ENCODE measurements at regions of chr10 and their contacts with region 1.

Region 1: DNA sequence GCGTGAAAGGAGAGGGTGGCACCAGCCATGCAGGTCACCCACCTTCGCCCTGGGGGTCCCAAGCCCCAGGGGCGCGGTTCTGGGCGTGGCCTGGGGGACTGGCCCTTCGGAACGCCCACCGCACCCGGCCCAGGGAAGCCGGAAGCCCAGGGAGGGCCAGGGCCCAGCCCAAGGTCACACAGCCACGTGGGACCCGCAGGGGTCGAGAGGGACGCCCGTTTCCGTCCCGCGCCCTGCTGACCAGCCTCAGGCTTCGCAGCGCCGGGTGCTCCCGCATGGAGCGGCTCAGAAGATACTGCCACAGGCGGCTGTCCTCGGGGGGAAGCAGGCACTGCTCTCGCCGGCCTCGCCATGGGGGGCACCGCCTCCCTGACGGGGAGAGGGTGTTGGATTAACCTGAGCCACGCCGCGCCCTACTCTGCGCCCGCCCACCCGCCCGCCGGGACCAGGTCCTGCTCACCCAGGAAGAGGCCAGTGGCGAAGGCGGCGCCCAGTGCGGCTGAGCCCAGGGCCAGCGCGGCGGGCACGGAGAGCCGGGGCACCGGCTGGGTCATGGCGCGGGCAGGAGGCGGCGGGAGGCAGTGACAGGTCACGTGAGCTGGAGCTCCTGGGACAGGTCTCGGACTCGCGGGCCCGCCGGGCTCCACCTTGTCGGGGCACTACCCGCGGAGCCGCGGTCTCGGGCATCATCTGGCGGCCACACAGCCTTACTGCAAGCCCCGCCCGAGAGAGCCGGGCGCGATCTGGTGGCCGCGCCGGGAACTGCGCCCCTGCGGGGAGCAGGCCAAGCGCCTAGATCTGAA is at the start of gene COMTD1:
- DNase-seq: peak; percentile 83 to 98
- H3K4me3 ChIP-seq: peak within 1 kb of the TSS; percentile 80
- H3K27ac ChIP-seq: peak within 1 kb of the TSS; percentile 86
- H3K4me1 ChIP-seq: peaks cover 37% of the 10 kb centered on the region
- H3K27me3 ChIP-seq: no peaks in the 10 kb centered on the region
- CTCF ChIP-seq: peak; percentile 99
- total RNA-seq, gene COMTD1: 20.5 and 25.1 TPM in 2 replicates

Region 2: DNA sequence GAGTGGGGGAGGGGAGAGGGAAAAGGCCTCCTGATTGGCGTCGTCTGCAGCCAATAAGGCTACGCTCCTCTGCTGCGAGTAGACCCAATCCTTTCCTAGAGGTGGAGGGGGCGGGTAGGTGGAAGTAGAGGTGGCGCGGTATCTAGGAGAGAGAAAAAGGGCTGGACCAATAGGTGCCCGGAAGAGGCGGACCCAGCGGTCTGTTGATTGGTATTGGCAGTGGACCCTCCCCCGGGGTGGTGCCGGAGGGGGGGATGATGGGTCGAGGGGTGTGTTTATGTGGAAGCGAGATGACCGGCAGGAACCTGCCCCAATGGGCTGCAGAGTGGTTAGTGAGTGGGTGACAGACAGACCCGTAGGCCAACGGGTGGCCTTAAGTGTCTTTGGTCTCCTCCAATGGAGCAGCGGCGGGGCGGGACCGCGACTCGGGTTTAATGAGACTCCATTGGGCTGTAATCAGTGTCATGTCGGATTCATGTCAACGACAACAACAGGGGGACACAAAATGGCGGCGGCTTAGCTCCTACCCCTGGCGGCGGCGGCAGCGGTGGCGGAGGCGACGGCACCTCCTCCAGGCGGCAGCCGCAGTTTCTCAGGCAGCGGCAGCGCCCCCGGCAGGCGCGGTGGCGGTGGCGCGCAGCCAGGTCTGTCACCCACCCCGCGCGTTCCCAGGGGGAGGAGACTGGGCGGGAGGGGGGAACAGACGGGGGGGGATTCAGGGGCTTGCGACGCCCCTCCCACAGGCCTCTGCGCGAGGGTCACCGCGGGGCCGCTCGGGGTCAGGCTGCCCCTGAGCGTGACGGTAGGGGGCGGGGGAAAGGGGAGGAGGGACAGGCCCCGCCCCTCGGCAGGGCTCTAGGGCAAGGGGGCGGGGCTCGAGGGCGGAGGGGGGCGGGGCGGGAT is 409.2 kb before region 1 on chr10 and contains the start of gene KAT6B:
- CTCF ChIA-PET with region 1: interaction called, 6 read pairs
- POLR2A ChIA-PET with region 1: no interaction called
- intact Hi-C with region 1: loop called (anchors 5 kb)
- DNase-seq: peak; percentile 99 to 100
- H3K4me3 ChIP-seq: peak within 1 kb of the TSS; percentile 85
- H3K27ac ChIP-seq: peak within 1 kb of the TSS; percentile 91
- H3K4me1 ChIP-seq: peaks cover 19% of the 10 kb centered on the region
- H3K27me3 ChIP-seq: no peaks in the 10 kb centered on the region
- CTCF ChIP-seq: peak; percentile 38; the same call in 1 of the 2 replicates
- total RNA-seq, gene KAT6B: 26.3 and 30.9 TPM in 2 replicates

Region 3: DNA sequence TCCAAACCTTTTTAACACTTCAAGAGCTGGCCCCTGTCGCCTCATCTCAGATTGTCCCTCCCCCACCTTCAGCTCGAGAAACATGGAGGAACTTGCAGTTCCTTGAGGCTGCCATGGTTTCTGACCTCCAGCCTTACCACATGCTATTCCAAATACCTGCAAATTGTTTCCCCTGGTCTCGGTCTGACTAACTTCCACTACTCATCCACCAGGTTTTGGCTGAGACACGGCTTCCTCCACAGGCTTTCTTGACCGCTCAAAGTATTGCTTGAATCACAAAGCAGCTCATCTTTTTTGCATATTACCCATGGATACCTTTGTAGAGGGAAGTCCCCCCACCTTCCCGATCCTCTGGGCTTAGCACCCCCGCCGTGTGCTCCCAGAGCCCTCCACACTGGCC is 129.3 kb before region 1 on chr10:
- CTCF ChIA-PET with region 1: interaction called, 11 read pairs
- POLR2A ChIA-PET with region 1: interaction called, 16 read pairs
- intact Hi-C with region 1: loop called (anchors 2 kb)
- DNase-seq: no peak
- H3K4me3 ChIP-seq: no peak overlapping the region
- H3K27ac ChIP-seq: no peak overlapping the region
- H3K4me1 ChIP-seq: peaks cover 14% of the 10 kb centered on the region
- H3K27me3 ChIP-seq: no peaks in the 10 kb centered on the region
- CTCF ChIP-seq: no peak

Region 4: DNA sequence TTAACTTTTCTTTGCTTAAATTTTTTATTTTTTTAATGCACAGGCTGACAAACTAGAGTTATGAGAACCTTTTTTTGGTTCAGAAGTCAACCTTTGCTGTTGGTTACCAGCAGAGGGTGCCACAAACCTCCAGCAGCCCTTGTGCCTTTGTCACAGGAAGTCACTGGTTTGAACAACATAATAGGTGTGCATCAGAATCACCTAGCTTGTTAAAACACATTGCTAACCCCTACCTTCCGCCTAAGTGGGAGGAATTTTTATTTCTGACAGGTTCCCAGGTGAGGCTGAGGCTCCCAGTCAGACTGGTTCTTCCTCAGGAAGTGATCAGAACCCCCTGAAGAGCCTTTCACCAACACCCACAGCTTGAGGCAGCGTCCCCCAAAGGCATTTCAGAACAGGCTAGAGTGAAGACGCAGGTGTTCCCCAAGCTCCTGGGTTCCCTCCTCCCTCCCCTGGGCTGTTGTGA is 47.6 kb before region 1 on chr10:
- CTCF ChIA-PET with region 1: interaction called, 25 read pairs
- POLR2A ChIA-PET with region 1: interaction called, 7 read pairs
- intact Hi-C with region 1: loop called (anchors 1 kb)
- DNase-seq: peak; percentile 73 to 96
- H3K4me3 ChIP-seq: no peak overlapping the region; the same call in 1 of the 2 replicates
- H3K27ac ChIP-seq: peak overlapping the region; percentile 49
- H3K4me1 ChIP-seq: peaks cover 57% of the 10 kb centered on the region
- H3K27me3 ChIP-seq: no peaks in the 10 kb centered on the region
- CTCF ChIP-seq: peak; percentile 84

Region 5: GRCh38 chr10:75294866-75295701 is 59.5 kb after region 1 on chr10:
- CTCF ChIA-PET with region 1: interaction called, 5 read pairs
- POLR2A ChIA-PET with region 1: no interaction called
- intact Hi-C with region 1: loop called (anchors 2 kb)
- DNase-seq: peak; percentile 81 to 97
- H3K4me3 ChIP-seq: peak overlapping the region; percentile 61
- H3K27ac ChIP-seq: peak overlapping the region; percentile 98
- H3K4me1 ChIP-seq: peaks cover 50% of the 10 kb centered on the region
- H3K27me3 ChIP-seq: no peaks in the 10 kb centered on the region
- CTCF ChIP-seq: 0 out of 2 replicates have a peak, but pooled peaks have one; percentile 17